ENCODE measurements at regions of chr20 and their contacts with region 1.

Region 1: GRCh38 chr20:34069341-34070078 is 42.5 kb downstream of the EIF2S2 start:
- DNase-seq: peak; percentile 48 to 83 (median 77)
- ATAC-seq: peak; percentile 79 to 85
- H3K4me3 ChIP-seq: no peak overlapping the region
- H3K27ac ChIP-seq: no peak overlapping the region
- H3K4me1 ChIP-seq: peaks cover 12% of the 10 kb centered on the region
- H3K27me3 ChIP-seq: no peaks in the 10 kb centered on the region

Region 2: DNA sequence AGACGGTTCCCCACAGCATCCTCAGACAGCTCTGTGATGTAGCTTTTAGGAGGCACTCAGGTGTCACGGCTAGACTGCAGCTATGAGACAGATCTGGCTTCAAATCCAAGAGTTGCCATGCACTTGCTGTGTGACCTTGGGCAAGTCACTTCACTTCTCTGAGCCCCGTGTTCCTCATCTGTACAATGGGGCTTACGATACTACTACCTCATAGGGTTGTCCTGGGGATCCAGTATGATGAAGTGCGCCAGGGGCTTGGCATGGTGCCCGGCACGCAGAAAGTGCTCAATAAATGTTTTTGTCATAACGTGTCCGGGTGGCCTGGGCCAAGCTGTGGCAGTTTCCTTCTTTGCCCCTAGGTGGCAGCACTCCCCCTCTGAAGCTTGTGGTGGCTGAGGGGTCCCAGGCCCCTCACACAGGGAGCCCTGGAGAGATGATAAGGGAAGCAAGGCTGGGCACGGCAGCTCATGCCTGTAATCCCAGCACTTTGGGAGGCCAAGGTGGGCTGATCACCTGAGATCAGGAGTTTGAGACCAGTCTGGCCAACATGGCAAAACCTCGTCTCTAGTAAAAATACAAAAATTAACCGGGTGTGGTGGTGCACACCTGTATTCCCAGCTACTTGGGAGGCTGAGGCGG is 277.4 kb before region 1 on chr20:
- intact Hi-C with region 1: loop called in 1 of 4 experiments (anchors 10 kb)
- DNase-seq: peak; percentile 41 to 75 (median 73)
- ATAC-seq: peak in 1 of 2 donors; percentile 13
- H3K4me3 ChIP-seq: no peak overlapping the region
- H3K27ac ChIP-seq: no peak overlapping the region
- H3K4me1 ChIP-seq: peaks cover 9% of the 10 kb centered on the region
- H3K27me3 ChIP-seq: no peaks in the 10 kb centered on the region

Region 3: DNA sequence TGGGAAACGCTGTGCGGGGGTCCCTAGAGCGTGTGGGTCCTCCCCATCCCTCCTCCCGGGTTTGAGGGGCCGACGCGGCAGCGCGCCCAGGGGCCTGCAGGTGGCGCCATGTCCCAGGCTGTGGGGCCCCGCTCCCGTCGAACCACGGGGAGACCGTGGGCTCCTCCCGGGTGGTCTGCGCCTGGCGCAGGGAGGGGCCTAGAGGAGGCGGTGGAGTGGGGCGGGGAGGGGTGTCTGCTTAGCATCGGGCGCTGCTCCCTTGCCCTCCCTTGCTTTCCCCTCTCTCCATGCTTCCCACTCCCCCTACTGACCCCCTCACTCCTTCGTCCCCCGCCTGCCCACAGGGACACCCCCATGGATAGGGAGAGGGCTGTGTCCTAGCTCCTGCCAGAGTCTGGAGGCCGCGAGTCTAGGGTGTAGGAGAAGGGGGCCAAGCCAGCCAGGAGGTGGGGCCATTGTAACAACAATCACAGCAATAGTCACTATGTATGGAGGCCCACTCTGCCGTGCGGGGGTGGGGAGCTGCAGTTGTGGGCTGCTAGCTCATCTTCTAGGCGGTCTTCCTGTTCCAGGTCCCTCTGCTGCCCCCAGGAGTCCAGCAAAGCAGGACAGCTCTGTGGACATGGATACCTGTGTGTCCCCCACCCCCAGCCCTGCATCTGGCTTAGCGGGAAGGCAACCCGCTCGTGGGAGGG is 206.7 kb before region 1 on chr20:
- intact Hi-C with region 1: loop called in 3 of 4 experiments (anchors 5 kb)
- DNase-seq: peak; percentile 70 to 88 (median 82)
- ATAC-seq: peak; percentile 84 to 88
- H3K4me3 ChIP-seq: no peak overlapping the region
- H3K27ac ChIP-seq: no peak overlapping the region
- H3K4me1 ChIP-seq: no peaks in the 10 kb centered on the region
- H3K27me3 ChIP-seq: no peaks in the 10 kb centered on the region

Region 4: DNA sequence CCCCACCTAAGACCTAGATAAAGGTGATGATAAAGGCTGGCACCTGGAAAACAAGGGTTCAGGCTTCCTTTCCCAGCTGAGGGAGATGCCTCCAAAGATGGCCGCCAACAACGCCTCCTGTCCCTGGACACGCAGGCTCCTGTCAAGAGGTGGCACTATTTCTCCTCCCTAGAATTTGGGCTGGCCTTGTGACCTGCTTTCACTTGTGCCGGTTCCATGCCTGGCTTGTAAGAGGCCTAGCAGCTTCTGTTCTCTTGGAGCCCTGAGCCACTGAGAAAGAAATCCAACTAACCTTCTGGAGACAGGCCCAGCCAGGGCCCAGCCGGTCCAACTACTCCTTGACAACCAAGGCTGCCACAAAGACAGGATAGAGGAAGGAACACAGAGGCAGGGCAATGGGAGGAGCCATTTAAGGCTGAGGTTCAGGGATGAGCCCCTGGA is 136.0 kb before region 1 on chr20:
- intact Hi-C with region 1: loop called (anchors 2 to 5 kb)
- DNase-seq: peak; percentile 62 to 87 (median 82)
- ATAC-seq: peak; percentile 93 to 95
- H3K4me3 ChIP-seq: no peak overlapping the region
- H3K27ac ChIP-seq: no peak overlapping the region
- H3K4me1 ChIP-seq: no peaks in the 10 kb centered on the region
- H3K27me3 ChIP-seq: no peaks in the 10 kb centered on the region

Measured in right cardiac atrium (tissue), 5 donors.